Psoas muscle (tissue), 8 donors: ENCODE measurements at regions of chr20 and their contacts with region 1.

Region 1: DNA sequence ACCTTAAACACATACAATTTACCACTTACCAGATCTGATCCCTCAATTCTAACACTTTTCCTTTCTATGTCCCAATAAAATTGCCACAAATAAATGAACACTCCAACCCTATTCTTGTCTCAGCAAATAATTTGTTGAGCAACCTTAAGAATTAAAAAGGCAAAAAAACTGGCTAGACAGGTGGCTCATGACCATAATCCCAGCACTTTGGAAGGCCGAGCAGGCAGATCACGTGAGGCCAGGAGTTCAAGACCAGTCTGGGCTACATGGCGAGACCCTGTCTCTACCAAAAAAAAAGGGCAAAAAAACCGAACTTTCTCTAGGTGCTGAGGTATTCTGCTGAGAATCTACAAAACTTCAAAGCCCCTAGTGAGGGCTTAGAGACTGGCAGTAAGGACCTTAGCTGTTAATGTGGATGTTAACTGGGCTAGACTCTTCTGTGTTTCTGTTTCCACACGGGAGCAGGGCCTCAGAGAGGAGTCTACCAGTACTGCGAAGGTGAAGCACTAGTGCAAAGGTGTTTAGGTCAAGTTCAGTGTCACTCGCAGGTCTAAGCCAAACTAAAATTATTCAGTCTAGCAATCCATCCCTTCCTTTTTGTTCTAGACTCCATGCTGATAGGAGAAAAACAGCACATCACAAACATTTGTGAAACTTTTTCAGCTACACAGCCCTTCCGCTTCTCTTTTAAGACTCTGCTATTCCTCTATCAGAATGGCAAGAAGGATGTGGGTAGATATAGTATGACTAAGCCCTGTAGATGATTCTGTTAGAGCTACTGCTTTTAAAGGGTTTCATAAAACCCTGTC is 2.6 kb downstream of the FASTKD5 start:
- DNase-seq: no peak
- ATAC-seq: no peak
- H3K4me3 ChIP-seq: peak overlapping the region; percentile 100
- H3K27ac ChIP-seq: peak overlapping the region; percentile 98
- H3K4me1 ChIP-seq: peaks cover 62% of the 10 kb centered on the region
- H3K27me3 ChIP-seq: no peaks in the 10 kb centered on the region
- CTCF ChIP-seq: no peak

Region 2: GRCh38 chr20:3071610-3072529 is 85.1 kb before region 1 on chr20 and contains the start of gene OXT:
- intact Hi-C with region 1: no loop called
- DNase-seq: peak; percentile 60 to 72
- ATAC-seq: peak; percentile 16 to 47 (median 28)
- H3K4me3 ChIP-seq: peak within 1 kb of the TSS; percentile 62
- H3K27ac ChIP-seq: no peak within 1 kb of the TSS
- H3K4me1 ChIP-seq: peaks cover 2% of the 10 kb centered on the region
- H3K27me3 ChIP-seq: peaks cover 0 to 16% (median 6%) of the 10 kb centered on the region in 3 donors
- CTCF ChIP-seq: no peak
- total RNA-seq, gene OXT: not detected

Region 3: DNA sequence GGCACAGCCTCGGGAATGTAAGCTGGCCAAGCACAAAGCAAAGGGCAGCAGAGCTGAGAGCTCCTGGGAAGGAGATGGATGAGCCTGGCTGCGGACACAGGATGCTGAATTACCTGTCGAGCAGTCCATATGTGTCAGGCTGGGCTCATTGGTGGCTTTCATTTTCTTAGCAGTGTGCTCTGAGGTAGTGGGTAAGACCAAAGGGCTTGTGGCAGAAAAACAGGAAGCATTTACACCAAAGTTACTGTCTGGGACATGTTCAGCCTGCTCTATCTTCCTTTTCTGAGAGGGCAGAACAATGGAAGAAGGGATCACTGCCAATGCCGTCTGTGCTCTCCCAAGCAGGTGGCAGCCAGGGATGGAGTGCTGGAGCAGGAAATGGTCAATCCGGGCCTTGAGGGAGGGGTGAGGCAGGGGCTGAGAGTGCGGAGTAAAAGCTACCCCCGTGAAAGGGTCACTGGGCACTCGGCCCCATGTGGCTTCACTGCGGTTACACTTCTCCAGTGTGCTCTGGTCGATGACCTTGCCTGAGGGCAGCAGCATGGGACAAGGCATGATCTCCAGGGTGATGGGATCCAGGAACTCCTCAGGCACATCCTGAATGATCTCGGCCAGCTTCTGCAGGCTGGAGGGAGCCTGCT is 35.6 kb before region 1 on chr20:
- intact Hi-C with region 1: loop called in 1 of 2 experiments (anchors 5 kb)
- DNase-seq: no peak
- ATAC-seq: no peak
- H3K4me3 ChIP-seq: no peak overlapping the region
- H3K27ac ChIP-seq: no peak overlapping the region
- H3K4me1 ChIP-seq: peaks cover 16% of the 10 kb centered on the region
- H3K27me3 ChIP-seq: no peaks in the 10 kb centered on the region
- CTCF ChIP-seq: no peak